ENCODE measurements at regions of chr3 and their contacts with region 1.

Region 1: DNA sequence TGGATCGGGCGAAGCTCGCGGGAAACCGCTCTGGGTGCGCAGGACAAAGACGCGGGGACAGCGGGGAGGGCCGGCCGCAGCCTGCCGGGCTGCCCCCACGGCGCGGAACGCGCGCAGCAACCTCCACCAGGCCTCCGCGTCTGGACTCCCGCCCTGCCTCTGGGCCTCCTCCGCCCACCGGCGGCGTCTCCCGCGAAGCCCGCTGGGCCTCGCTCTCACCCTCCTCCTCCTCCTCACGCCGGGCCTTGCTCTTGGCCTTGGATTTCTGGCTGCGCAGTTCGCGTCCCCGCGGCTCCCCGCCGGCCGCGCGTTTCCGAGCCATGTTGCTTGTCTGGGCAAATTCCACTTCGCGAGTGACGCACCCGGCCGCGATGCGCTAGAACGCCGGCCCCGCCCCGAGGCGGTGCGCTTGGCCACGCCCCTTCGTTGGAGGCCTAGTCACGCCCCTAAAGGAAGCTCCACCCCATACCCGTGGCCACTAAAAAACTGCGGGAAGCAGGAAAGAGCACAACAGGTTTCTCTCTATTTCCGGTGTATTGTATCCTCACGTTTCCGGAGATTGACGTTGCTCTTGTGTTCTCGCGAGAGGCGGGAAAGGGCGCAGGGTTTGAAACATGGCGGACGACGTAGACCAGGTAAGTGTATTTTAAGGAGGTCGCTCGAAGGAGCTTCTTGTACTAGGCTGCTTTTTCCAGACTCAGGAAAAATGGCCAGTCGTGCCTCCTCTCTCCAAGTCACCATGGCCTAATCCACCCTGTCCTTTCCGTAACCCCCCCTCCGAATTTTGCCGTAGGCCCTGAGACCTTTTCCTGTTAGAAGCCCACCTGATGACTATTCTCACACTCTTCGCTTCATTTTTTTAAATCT is at the starts of genes LSM3 and XPC:
- DNase-seq: peak; percentile 99
- H3K4me3 Mint-ChIP-seq: peak within 1 kb of the TSS; percentile 85
- H3K27ac Mint-ChIP-seq: peak within 1 kb of the TSS; percentile 100
- H3K4me1 Mint-ChIP-seq: peaks cover 41% of the 10 kb centered on the region
- H3K27me3 Mint-ChIP-seq: no peaks in the 10 kb centered on the region
- CTCF ChIP-seq: no peak
- total RNA-seq, gene LSM3: 10.2 and 12.9 TPM in 2 replicates
- total RNA-seq, gene XPC: 73.3 and 83.6 TPM in 2 replicates

Region 2: DNA sequence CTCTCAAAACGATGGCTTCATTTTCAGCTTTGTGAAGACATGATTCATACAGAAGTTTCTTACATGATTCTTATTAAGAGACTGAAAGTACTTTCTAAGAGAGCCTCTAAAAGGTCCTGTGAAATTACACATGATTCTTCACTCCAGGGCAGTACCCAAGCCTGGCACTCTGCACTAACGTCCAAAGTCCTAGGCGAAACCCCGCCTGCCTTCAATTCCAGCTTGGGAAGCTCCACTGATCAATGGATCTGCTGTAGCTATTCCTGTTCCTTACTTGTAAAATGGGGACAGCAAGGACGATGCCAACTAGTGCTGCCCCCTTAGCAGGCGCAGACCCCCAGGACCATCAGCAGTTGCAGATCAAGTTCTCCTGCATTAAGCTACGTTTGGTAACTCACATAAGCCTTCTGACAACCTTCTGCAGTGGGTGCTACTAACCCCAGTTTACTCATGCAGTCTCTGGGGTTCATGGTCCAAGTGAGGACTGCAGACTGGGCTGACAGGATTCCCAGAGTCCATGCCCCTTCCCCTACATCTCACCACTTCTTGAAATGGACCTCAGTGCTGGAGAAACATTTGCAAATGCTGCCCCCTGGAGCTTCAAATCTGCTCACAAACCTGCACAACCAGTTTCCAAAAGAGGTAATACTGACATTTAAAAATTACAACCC is 64.4 kb before region 1 on chr3:
- CTCF ChIA-PET with region 1: no interaction called
- POLR2A ChIA-PET with region 1: interaction called, 21 read pairs
- intact Hi-C with region 1: no loop called
- DNase-seq: no peak
- H3K4me3 Mint-ChIP-seq: no peak overlapping the region
- H3K27ac Mint-ChIP-seq: no peak overlapping the region
- H3K4me1 Mint-ChIP-seq: no peaks in the 10 kb centered on the region
- H3K27me3 Mint-ChIP-seq: no peaks in the 10 kb centered on the region
- CTCF ChIP-seq: peak; percentile 13

Region 3: DNA sequence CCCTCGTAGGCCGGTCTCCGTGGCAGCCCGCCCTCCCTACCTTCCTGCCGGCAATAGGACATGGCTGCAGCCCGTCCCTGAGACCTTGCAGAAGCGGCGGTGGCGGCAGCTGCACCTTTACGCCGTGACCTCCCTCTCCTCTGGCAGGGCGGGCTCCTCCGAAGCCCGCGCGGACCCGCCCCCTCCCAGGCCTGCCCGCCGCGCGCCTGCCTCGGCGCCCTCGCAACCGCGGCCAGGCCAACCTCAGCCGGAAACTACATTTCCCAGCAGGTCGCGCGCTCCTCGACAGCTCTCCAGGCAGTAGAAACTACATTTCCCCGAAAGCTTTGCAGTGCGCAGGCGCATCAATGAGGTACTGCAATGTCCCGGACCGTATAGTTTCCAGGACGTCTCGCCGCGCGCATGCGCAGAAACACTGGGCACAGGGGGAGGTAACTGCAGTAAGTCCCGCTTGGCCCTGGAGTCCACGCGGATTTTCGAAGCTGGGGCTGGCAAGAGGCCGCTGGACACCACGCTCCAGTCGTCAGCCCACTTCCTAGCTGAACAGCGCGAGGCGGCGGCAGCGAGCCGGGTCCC is 53.8 kb before region 1 on chr3 and contains the starts of genes CHCHD4 and TMEM43:
- CTCF ChIA-PET with region 1: interaction called, 6 read pairs
- POLR2A ChIA-PET with region 1: interaction called, 150 read pairs
- intact Hi-C with region 1: loop called (anchors 1 kb)
- DNase-seq: peak; percentile 99
- H3K4me3 Mint-ChIP-seq: peak within 1 kb of the TSS; percentile 99
- H3K27ac Mint-ChIP-seq: peak within 1 kb of the TSS; percentile 96
- H3K4me1 Mint-ChIP-seq: peaks cover 30% of the 10 kb centered on the region
- H3K27me3 Mint-ChIP-seq: no peaks in the 10 kb centered on the region
- CTCF ChIP-seq: no peak
- total RNA-seq, gene CHCHD4: 31.6 and 35.0 TPM in 2 replicates
- total RNA-seq, gene TMEM43: 120 and 124 TPM in 2 replicates

Region 4: GRCh38 chr3:14152242-14152962 is 26.1 kb before region 1 on chr3:
- CTCF ChIA-PET with region 1: interaction called, 5 read pairs
- POLR2A ChIA-PET with region 1: interaction called, 14 read pairs
- intact Hi-C with region 1: no loop called
- DNase-seq: no peak
- H3K4me3 Mint-ChIP-seq: no peak overlapping the region
- H3K27ac Mint-ChIP-seq: peak overlapping the region; percentile 63
- H3K4me1 Mint-ChIP-seq: no peaks in the 10 kb centered on the region
- H3K27me3 Mint-ChIP-seq: no peaks in the 10 kb centered on the region
- CTCF ChIP-seq: no peak

Region 5: GRCh38 chr3:14162185-14162584 is 16.3 kb before region 1 on chr3:
- CTCF ChIA-PET with region 1: interaction called, 10 read pairs
- POLR2A ChIA-PET with region 1: interaction called, 43 read pairs
- intact Hi-C with region 1: no loop called
- DNase-seq: no peak
- H3K4me3 Mint-ChIP-seq: no peak overlapping the region
- H3K27ac Mint-ChIP-seq: peak overlapping the region; percentile 59
- H3K4me1 Mint-ChIP-seq: peaks cover 20% of the 10 kb centered on the region
- H3K27me3 Mint-ChIP-seq: no peaks in the 10 kb centered on the region
- CTCF ChIP-seq: no peak

Region 6: GRCh38 chr3:14222457-14222856 is 44.0 kb after region 1 on chr3:
- CTCF ChIA-PET with region 1: no interaction called
- POLR2A ChIA-PET with region 1: no interaction called
- intact Hi-C with region 1: no loop called
- DNase-seq: no peak
- H3K4me3 Mint-ChIP-seq: no peak overlapping the region
- H3K27ac Mint-ChIP-seq: no peak overlapping the region
- H3K4me1 Mint-ChIP-seq: no peaks in the 10 kb centered on the region
- H3K27me3 Mint-ChIP-seq: no peaks in the 10 kb centered on the region
- CTCF ChIP-seq: no peak

Region 7: DNA sequence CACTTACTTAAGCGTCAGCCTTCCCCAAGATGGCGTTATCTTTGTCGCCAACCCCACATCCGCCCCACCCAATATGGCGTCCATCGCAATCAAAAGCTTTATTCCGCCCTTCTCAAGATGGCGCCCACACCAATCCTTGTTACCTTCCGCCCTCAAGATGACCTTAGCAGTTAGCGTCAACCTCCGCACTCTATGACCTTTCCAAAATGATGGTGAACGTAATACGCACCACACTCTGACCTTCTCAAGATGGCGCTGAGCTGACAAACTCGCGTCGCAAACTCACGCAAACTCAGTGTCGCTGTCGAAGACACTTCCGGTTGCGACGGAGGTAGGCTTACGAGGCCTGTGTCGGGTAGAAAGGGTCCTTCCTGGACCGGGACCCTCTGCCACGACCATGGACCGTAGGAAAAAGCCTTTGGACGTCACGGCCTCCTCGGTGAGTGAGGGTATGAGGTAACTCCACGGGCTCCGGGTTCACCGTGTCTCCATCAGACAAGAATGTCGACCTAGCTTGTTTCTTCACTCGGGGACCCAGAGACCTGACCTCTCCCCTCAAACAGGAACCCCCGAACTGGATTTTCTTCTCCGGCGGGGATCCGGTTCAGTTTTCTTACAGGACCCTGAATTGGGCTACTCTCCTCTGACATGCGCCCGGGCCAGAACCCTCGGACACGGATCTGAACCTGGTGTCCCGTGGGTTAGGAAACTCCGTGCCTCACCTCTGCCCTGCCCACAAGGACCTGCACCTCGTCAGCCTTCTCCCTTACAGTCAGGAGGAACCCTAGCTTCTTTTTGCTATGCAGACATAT is 473.2 kb after region 1 on chr3 and contains the start of gene CCDC174:
- CTCF ChIA-PET with region 1: no interaction called
- POLR2A ChIA-PET with region 1: interaction called, 18 read pairs
- intact Hi-C with region 1: no loop called
- DNase-seq: peak; percentile 99
- H3K4me3 Mint-ChIP-seq: peak within 1 kb of the TSS; percentile 99
- H3K27ac Mint-ChIP-seq: peak within 1 kb of the TSS; percentile 99
- H3K4me1 Mint-ChIP-seq: peaks cover 12% of the 10 kb centered on the region
- H3K27me3 Mint-ChIP-seq: no peaks in the 10 kb centered on the region
- CTCF ChIP-seq: no peak
- total RNA-seq, gene CCDC174: 25.4 and 28.7 TPM in 2 replicates

Measured in MCF 10A (cell line).